GM10248 (cell line): ENCODE measurements at regions of chr19 and their contacts with region 1.

Region 1: DNA sequence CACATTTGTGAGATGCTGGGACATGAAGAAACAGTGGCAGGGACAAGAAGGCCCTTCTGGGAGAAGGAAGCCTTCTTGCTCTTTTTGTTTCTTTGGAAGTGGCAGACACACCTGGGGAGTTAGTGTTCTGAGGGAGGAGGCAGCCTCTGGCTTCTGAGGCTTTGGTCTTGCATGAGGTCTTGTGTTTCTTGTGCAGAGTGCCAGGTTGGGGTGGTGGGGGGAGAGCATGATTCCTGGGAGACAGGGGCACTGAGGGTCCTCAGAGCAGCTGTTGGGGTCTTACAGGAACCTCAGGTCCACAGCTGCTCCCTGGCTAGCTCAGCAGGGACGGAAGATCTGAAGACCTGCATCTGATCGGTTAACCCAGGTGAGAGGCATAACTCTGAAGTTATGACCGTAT is 167.5 kb upstream of the ZNF536 start:
- DNase-seq: peak; percentile 4
- CTCF ChIP-seq: no peak

Region 2: DNA sequence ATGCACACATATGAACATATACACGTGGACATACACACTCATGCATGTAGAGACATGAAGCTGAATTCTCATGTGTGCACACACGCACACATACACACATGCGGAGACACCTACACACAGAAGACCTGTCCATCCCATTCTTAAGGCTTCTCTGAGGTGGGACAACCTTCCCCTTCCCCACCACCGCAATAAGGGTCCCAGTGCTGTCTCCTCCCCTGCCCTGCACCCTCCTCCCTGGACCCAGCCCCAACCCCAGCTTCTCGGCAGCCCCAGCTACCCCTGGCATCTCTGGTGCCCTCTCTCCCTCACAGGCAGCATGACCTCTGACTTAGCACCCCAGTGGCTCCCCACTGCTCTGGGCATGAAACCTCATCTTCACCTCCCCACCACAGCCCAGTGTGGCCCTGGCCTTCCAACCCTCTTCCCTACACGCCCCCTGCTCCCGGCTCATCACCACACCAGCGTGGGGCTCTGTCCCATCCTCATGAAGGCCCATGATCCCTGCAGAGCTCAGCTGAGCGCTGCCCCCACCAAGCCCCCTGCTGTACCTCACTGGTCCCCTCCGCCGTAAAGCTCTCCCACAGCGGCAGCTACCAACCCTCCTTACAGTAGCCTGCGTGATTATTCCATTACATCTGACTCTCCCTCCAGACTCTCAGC is 36.6 kb before region 1 on chr19:
- CTCF ChIA-PET with region 1: no interaction called
- POLR2A ChIA-PET with region 1: no interaction called
- DNase-seq: no peak
- CTCF ChIP-seq: no peak

Region 3: DNA sequence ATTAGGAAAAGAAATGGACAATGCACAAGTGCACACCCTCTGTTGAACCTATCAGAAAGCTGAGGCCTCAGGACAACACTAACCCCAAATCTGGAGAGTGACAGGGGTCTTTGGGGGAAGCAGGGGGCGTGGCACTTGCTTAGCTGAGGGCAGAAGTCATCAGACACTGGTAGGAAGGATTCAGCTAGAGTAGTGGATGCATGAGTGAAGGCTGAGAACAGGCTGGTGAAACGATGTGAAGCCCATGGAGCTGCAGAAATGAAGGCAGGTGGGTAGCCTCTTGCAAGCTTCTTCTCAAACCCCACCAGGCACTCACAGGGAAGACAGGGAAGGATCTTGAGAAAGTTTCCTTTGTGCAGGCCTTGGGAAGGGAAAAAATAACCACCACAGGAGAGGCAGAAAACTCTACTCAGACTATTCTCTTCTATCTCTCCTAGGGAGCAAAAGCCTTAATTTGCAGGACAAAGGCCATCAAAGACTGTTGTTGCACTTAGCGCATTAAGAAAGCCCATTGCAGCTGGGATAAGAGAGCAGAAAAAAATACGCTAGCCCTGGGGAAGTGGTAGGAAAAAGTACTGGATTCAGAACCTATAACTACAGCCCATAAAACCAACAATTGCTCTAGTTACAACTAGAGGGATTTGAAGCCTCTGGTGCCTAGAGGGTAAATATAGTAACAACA is 25.9 kb before region 1 on chr19:
- CTCF ChIA-PET with region 1: interaction called, 10 read pairs
- POLR2A ChIA-PET with region 1: no interaction called
- DNase-seq: no peak
- CTCF ChIP-seq: no peak

Region 4: DNA sequence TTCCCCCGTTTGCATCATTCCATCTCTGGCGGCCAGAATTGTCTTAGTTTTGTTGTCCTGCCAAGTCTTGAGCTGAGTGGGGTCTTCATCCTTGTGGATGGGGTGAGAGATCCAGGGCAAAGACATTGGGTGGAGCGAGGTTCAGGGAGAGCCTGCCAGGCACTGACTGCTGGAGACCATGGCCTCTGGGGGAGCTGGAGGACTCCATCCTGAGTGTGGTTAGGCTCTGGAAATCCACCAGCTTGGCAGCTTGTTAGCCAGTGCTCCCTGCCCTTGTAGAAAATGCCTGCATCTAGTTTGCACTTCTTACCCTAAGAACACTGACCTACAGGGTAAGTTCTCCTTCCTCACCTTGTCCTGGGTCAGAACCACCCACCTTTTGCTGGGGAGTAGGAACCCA is 70.3 kb after region 1 on chr19:
- CTCF ChIA-PET with region 1: no interaction called
- POLR2A ChIA-PET with region 1: no interaction called
- DNase-seq: no peak
- CTCF ChIP-seq: no peak